ENCODE measurements at regions of chr1 and their contacts with region 1.

Region 1: GRCh38 chr1:175146529-175147213 is 45.9 kb downstream of the KIAA0040 start:
- DNase-seq: peak; percentile 59 to 79 (median 75)
- H3K4me3 ChIP-seq: peak overlapping the region in 2 of 7 experiments; percentile 33 to 43
- H3K27ac ChIP-seq: no peak overlapping the region
- H3K4me1 ChIP-seq: peaks cover 0 to 2% (median 0%) of the 10 kb centered on the region in 4 experiments
- H3K27me3 ChIP-seq: peaks cover 0 to 4% (median 2%) of the 10 kb centered on the region in 5 experiments

Region 2: DNA sequence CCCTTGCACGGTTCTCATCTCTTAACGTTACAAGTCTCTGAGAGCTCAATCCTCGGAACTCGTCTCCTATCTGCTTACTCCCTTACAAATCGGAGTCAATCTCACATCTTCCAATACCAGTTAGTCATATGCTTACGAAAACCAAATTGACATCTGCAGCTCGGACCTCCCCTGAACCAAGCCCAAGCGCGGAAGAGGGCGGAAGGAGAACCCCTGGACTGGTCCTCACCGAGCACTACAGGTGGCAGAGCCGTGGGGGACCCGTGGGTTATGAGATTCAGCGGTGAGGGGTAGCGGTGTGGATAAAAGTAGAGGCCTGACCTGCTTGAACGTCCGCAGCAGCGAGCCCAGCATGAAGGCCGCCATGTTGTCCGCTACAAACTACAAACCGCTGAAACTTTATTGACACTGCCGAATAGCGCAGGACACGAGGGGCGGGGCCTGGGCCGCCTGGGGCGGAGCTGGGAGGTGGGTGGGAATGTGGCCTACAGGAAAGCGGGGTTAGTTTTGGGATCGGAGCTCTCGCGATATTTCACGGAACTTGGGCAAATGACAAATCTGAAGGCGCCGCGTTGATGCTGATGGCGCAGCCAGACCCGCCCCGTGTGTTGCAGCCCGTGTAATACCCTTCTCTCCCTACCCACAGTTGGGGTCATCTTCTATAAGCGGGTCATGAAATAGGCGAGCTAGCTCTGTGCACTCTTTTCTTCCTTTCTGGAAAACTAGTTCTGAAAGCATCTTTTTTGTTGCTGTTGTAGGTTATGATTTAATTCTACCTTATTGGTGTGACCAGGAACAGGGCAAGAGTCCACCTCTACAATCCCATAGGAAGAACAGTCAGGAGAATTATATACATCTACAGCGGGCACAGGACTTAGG is 123.4 kb before region 1 on chr1 and contains the start of gene MRPS14:
- CTCF ChIA-PET with region 1: interaction called, 16 read pairs
- POLR2A ChIA-PET with region 1: no interaction called
- DNase-seq: peak; percentile 99 to 100 (median 100)
- H3K4me3 ChIP-seq: peak within 1 kb of the TSS; percentile 95 to 100 (median 100)
- H3K27ac ChIP-seq: peak within 1 kb of the TSS; percentile 94 to 97
- H3K4me1 ChIP-seq: peaks cover 5 to 13% (median 10%) of the 10 kb centered on the region in 4 experiments
- H3K27me3 ChIP-seq: no peaks in the 10 kb centered on the region

Region 3: DNA sequence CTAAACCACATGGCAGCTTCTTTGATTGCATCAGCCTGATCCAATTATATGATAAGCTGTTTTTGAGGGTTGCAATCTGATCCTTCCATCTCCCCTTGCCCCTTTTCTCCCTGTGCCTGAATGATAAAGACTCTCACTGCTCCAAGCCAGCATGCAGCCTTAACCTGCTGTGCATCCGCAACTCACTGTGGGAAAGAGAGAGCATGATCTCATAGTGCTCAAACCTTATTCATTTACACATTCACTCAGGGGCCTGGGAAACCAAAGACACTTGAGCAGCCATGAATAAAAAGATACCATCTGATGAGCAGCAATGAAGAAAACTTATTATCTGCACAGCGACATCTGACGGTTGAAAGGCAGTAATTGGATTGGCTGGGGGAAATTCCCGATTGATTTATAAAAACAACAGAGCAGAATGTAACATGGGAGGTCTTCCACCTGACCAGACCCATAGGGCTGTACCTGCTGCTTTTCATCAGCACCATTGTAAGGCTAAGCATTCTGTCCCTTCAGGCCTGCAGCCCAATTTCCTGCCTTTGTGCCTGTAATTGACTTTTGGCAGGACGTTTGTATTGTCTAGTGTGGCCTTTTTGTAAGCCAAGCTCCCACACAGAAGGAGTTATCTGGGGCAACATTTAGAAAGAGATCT is 16.5 kb before region 1 on chr1:
- CTCF ChIA-PET with region 1: interaction called, 23 read pairs
- POLR2A ChIA-PET with region 1: no interaction called
- DNase-seq: no peak
- H3K4me3 ChIP-seq: no peak overlapping the region
- H3K27ac ChIP-seq: no peak overlapping the region
- H3K4me1 ChIP-seq: peaks cover 0 to 17% (median under 1%) of the 10 kb centered on the region in 4 experiments
- H3K27me3 ChIP-seq: peaks cover 0 to 2% (median 0%) of the 10 kb centered on the region in 5 experiments

Region 4: GRCh38 chr1:175319418-175320230 is 173.0 kb after region 1 on chr1:
- CTCF ChIA-PET with region 1: interaction called, 140 read pairs
- POLR2A ChIA-PET with region 1: no interaction called
- DNase-seq: peak; percentile 60 to 80 (median 72)
- H3K4me3 ChIP-seq: peak overlapping the region in 1 of 7 experiments; percentile 7
- H3K27ac ChIP-seq: no peak overlapping the region
- H3K4me1 ChIP-seq: peaks cover 0 to 4% (median 1%) of the 10 kb centered on the region in 4 experiments
- H3K27me3 ChIP-seq: peaks cover 0 to 5% (median 0%) of the 10 kb centered on the region in 5 experiments

Measured in common myeloid progenitor, CD34-positive (primary cell).